Sigmoid colon (tissue), 7 donors: ENCODE measurements at regions of chr9 and their contacts with region 1.

Region 1: GRCh38 chr9:16213781-16214515 is 656.5 kb downstream of the BNC2 start:
- DNase-seq: peak; percentile 89
- H3K4me3 ChIP-seq: no peak overlapping the region
- H3K27ac ChIP-seq: peak overlapping the region; percentile 8 to 82 (median 77)
- H3K4me1 ChIP-seq: peaks cover 0 to 47% (median 32%) of the 10 kb centered on the region in 4 donors
- H3K27me3 ChIP-seq: no peaks in the 10 kb centered on the region
- CTCF ChIP-seq: no peak
- EP300 ChIP-seq: no peak
- POLR2A ChIP-seq: no peak

Region 2: DNA sequence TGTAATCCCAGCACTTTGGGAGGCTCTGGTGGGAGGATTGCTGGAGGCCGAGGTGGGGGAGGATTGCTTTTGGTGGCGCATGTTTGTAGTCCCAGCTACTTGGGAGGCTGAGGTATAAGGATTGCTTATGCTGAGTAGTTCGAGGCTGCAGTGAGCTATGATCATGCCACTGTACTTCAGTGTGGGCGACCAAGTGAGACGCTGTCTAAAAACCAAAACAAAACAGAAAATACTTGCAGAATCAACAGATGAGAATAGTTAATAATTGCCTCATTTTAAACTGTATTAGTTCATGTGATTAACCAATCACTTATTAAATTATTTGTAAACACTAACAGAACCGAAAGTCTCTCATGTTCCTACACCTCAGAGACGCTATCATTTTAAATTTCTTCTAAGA is 543.1 kb before region 1 on chr9:
- intact Hi-C with region 1: no loop called
- DNase-seq: no peak
- H3K4me3 ChIP-seq: no peak overlapping the region
- H3K27ac ChIP-seq: no peak overlapping the region
- H3K4me1 ChIP-seq: no peaks in the 10 kb centered on the region
- H3K27me3 ChIP-seq: no peaks in the 10 kb centered on the region
- CTCF ChIP-seq: no peak
- EP300 ChIP-seq: no peak
- POLR2A ChIP-seq: no peak

Region 3: DNA sequence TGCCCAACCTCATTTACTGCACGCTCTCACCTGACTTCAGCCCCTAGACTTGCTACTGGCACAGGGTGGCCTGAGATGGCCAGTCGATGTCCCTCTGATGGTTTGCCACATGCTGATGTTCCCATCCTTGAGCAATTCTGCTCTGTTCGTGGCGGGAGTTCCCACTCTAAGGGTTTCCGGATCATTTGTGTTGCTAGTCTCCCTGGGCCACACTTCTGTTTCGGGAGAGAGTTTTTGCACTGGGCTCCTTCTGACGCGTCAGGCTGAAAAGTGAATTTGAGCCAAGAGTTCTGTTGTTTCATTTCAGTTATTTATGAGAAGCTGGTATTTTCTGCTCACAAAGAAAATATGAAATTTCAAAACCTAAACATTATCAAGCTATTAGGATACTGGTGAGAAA is 58.8 kb after region 1 on chr9:
- intact Hi-C with region 1: loop called (anchors 5 kb)
- DNase-seq: peak; percentile 74
- H3K4me3 ChIP-seq: no peak overlapping the region
- H3K27ac ChIP-seq: peak overlapping the region in 3 of 4 donors; percentile 33 to 59 (median 55)
- H3K4me1 ChIP-seq: peaks cover 0 to 28% (median 17%) of the 10 kb centered on the region in 4 donors
- H3K27me3 ChIP-seq: no peaks in the 10 kb centered on the region
- CTCF ChIP-seq: no peak
- EP300 ChIP-seq: no peak
- POLR2A ChIP-seq: no peak